Caco-2 (cell line): ENCODE measurements at regions of chr7 and their contacts with region 1.

Region 1: DNA sequence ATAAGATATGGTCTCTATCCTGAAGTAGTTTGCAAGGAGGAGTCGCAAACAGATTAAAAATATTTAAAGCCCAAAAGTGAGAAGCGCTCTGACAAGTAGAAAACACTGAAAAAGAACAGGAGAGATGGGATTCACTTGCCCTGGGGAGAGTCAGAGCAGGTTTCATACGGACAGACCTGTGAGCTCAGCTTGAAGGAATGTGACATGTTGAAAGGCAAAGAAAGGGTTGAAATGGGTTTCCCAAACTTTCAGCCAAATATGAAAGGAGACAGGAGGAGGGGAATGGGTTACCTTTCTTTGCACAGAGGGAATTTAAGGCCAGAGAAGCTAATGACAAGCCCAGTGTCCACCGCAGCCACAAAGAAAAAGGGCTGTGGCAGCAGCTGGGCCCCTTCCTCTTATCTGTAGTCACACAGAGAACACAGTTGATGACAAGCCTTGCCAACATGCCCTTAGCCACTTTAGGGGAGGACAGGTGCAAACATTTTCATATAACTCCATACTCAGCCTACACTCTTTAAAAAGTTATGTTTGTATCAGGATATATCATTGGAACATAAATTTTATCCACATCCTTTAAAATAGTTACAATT is 14.9 kb downstream of the HOXA1 start:
- DNase-seq: peak; percentile 62 to 74
- H3K4me3 ChIP-seq: no peak overlapping the region
- H3K4me3 Mint-ChIP-seq: peak overlapping the region; percentile 54
- H3K27ac Mint-ChIP-seq: peak overlapping the region; percentile 91
- H3K4me1 ChIP-seq: peaks cover 37% of the 10 kb centered on the region
- H3K4me1 Mint-ChIP-seq: peaks cover 30% of the 10 kb centered on the region
- H3K27me3 ChIP-seq: no peaks in the 10 kb centered on the region
- H3K27me3 Mint-ChIP-seq: no peaks in the 10 kb centered on the region
- CTCF ChIP-seq: no peak

Region 2: GRCh38 chr7:26686448-26686981 is 394.4 kb before region 1 on chr7:
- CTCF ChIA-PET with region 1: no interaction called
- POLR2A ChIA-PET with region 1: no interaction called
- intact Hi-C with region 1: no loop called
- DNase-seq: peak; percentile 51 to 72
- H3K4me3 ChIP-seq: no peak overlapping the region
- H3K4me3 Mint-ChIP-seq: no peak overlapping the region
- H3K27ac Mint-ChIP-seq: peak overlapping the region; percentile 73
- H3K4me1 ChIP-seq: peaks cover 58% of the 10 kb centered on the region
- H3K4me1 Mint-ChIP-seq: peaks cover 32% of the 10 kb centered on the region
- H3K27me3 ChIP-seq: no peaks in the 10 kb centered on the region
- H3K27me3 Mint-ChIP-seq: no peaks in the 10 kb centered on the region
- CTCF ChIP-seq: peak; percentile 52 to 66

Region 3: DNA sequence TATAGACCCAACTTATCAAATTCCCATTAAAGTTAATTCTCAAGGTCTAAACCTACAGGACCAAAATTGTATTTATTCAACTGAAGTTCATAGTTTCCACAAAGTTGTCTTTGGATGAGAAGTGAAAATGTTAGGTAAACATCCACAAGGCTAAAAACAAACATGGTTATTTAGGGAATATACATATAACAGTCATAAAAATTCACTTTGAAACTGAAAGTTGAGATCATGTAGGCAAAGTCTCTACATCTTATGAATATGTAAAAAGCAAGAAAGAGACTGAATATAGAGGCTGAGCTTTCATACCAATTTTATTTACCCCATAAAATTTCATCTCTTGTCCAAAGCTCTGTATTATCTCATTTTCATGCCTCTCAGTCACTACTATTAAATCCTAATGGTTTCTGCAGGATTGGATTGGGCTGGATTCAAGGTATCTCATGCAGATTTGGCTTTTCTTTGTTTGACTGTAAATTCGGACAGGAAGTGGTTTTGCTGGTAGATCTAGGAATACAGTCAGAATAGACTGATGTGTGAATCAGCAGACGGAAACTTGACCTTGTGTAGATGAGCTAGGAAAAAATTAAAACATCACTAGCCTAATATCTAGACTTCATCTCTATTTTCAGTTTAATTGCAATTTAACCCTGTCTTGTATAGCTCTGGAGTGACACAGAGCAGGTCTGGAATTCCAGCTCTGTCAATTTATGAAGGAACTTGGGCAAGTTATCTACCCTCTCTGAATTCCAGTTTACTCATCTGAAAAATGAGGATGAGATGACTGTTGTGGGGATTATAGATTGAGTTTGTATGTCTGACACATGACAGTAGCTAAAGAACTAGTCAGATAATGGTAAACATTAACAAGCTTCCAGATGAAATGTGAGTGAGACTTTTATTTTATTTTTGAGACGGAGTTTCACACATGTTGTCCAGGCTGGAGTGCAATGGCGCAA is 189.3 kb before region 1 on chr7:
- CTCF ChIA-PET with region 1: no interaction called
- POLR2A ChIA-PET with region 1: no interaction called
- intact Hi-C with region 1: no loop called
- DNase-seq: no peak
- H3K4me3 ChIP-seq: no peak overlapping the region
- H3K4me3 Mint-ChIP-seq: no peak overlapping the region
- H3K27ac Mint-ChIP-seq: no peak overlapping the region
- H3K4me1 ChIP-seq: no peaks in the 10 kb centered on the region
- H3K4me1 Mint-ChIP-seq: no peaks in the 10 kb centered on the region
- H3K27me3 ChIP-seq: no peaks in the 10 kb centered on the region
- H3K27me3 Mint-ChIP-seq: peaks cover 8% of the 10 kb centered on the region
- CTCF ChIP-seq: no peak

Region 4: GRCh38 chr7:27031289-27032172 is 49.4 kb before region 1 on chr7:
- CTCF ChIA-PET with region 1: no interaction called
- POLR2A ChIA-PET with region 1: no interaction called
- intact Hi-C with region 1: loop called (anchors 5 kb)
- DNase-seq: no peak
- H3K4me3 ChIP-seq: no peak overlapping the region
- H3K4me3 Mint-ChIP-seq: no peak overlapping the region
- H3K27ac Mint-ChIP-seq: peak overlapping the region; percentile 58
- H3K4me1 ChIP-seq: peaks cover 14% of the 10 kb centered on the region
- H3K4me1 Mint-ChIP-seq: peaks cover 12% of the 10 kb centered on the region
- H3K27me3 ChIP-seq: no peaks in the 10 kb centered on the region
- H3K27me3 Mint-ChIP-seq: no peaks in the 10 kb centered on the region
- CTCF ChIP-seq: no peak